ENCODE measurements at regions of chr13 and their contacts with region 1.

Region 1: GRCh38 chr13:51797664-51798488 is 6.1 kb downstream of the DHRS12 start:
- DNase-seq: peak; percentile 44 to 67
- ATAC-seq: peak; percentile 63 to 81
- H3K4me3 ChIP-seq: no peak overlapping the region
- H3K27ac ChIP-seq: peak overlapping the region; percentile 51; a peak in 3 of 6 replicates
- H3K4me1 ChIP-seq: peaks cover 31% of the 10 kb centered on the region
- CTCF ChIP-seq: peak; percentile 63
- EP300 ChIP-seq: no peak
- POLR2A ChIP-seq: no peak
- RAD21 ChIP-seq: peak; percentile 82 to 83

Region 2: GRCh38 chr13:51125498-51126226 is 672.2 kb before region 1 on chr13:
- CTCF ChIA-PET with region 1: interaction called, 15 read pairs
- POLR2A ChIA-PET with region 1: no interaction called
- DNase-seq: peak; percentile 19 to 69
- ATAC-seq: peak; percentile 89 to 93
- H3K4me3 ChIP-seq: no peak overlapping the region
- H3K27ac ChIP-seq: no peak overlapping the region
- H3K4me1 ChIP-seq: peaks cover 10% of the 10 kb centered on the region; the same call in 1 of the 3 replicates
- CTCF ChIP-seq: peak; percentile 59
- EP300 ChIP-seq: no peak
- POLR2A ChIP-seq: no peak
- RAD21 ChIP-seq: peak; percentile 65 to 75

Region 3: GRCh38 chr13:51286135-51287002 is 511.5 kb before region 1 on chr13:
- CTCF ChIA-PET with region 1: interaction called, 17 read pairs
- POLR2A ChIA-PET with region 1: no interaction called
- DNase-seq: peak; percentile 31 to 63
- ATAC-seq: peak; percentile 90 to 97
- H3K4me3 ChIP-seq: no peak overlapping the region
- H3K27ac ChIP-seq: no peak overlapping the region
- H3K4me1 ChIP-seq: peaks cover 1% of the 10 kb centered on the region; the same call in 1 of the 3 replicates
- CTCF ChIP-seq: peak; percentile 82
- EP300 ChIP-seq: no peak
- POLR2A ChIP-seq: no peak
- RAD21 ChIP-seq: peak; percentile 73 to 78

Region 4: GRCh38 chr13:51583875-51584730 is 213.8 kb before region 1 on chr13 and contains the start of gene WDFY2:
- CTCF ChIA-PET with region 1: interaction called, 13 read pairs
- POLR2A ChIA-PET with region 1: interaction called, 3 read pairs
- DNase-seq: peak; percentile 69 to 99
- ATAC-seq: peak; percentile 90 to 91
- H3K4me3 ChIP-seq: peak within 1 kb of the TSS; percentile 89
- H3K27ac ChIP-seq: peak within 1 kb of the TSS; percentile 93 to 95
- H3K4me1 ChIP-seq: peaks cover 35% of the 10 kb centered on the region; the same call in 2 of the 3 replicates
- CTCF ChIP-seq: no peak
- EP300 ChIP-seq: no peak
- POLR2A ChIP-seq: peak; percentile 81
- RAD21 ChIP-seq: peak in 1 of 2 experiments; percentile 10; a peak in 1 of 5 replicates
- polyA plus RNA-seq, gene WDFY2: 8.5 TPM in 2 replicates

Region 5: DNA sequence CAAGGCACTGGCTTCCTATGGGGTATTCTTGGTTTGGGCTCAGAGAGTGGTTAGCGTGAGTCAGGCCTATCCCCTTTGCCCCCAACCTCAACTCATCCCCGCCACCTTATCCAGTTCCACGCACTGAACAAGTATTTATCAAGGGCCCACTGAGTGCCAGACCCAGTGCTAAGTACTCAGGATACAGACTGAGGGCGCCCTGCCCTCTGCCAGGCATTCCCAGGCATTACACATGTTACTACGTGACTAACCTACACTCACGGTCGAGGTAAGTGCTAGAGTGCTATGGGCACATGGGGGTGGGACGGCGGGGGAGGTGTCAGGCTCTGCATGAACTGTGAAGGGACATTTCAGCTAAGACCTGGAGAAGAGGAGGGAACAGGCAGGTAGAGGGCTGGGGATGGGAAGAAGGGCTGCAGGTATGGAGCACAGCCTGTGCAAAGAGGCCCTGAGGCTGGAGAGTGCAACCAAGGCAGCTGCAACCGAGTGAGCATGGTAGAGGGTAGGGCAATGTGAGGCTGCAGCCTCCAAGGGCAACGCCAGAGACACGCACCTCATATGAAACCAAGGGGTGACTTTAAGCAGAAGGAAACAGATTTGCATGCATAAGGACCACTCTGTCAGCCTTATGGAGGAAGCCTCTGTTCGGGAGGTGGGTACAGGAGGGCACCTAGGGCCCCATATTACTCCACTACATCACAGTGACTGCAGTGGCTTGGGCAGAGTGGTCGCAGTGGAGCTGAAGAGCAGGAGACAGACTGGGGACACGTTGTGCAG is 16.4 kb before region 1 on chr13:
- CTCF ChIA-PET with region 1: interaction called, 33 read pairs
- POLR2A ChIA-PET with region 1: no interaction called
- DNase-seq: peak in 1 of 2 experiments; percentile 28
- ATAC-seq: peak; percentile 86 to 87
- H3K4me3 ChIP-seq: no peak overlapping the region
- H3K27ac ChIP-seq: no peak overlapping the region
- H3K4me1 ChIP-seq: no peaks in the 10 kb centered on the region
- CTCF ChIP-seq: no peak; the same call in 2 of the 3 replicates
- EP300 ChIP-seq: no peak
- POLR2A ChIP-seq: no peak
- RAD21 ChIP-seq: peak; percentile 44 to 53; a peak in 4 of 5 replicates